GM10248 (cell line): ENCODE measurements at regions of chr15 and their contacts with region 1.

Region 1: GRCh38 chr15:57861036-57861638 is 154.6 kb downstream of the POLR2M start:
- DNase-seq: peak; percentile 36
- CTCF ChIP-seq: peak; percentile 75

Region 2: DNA sequence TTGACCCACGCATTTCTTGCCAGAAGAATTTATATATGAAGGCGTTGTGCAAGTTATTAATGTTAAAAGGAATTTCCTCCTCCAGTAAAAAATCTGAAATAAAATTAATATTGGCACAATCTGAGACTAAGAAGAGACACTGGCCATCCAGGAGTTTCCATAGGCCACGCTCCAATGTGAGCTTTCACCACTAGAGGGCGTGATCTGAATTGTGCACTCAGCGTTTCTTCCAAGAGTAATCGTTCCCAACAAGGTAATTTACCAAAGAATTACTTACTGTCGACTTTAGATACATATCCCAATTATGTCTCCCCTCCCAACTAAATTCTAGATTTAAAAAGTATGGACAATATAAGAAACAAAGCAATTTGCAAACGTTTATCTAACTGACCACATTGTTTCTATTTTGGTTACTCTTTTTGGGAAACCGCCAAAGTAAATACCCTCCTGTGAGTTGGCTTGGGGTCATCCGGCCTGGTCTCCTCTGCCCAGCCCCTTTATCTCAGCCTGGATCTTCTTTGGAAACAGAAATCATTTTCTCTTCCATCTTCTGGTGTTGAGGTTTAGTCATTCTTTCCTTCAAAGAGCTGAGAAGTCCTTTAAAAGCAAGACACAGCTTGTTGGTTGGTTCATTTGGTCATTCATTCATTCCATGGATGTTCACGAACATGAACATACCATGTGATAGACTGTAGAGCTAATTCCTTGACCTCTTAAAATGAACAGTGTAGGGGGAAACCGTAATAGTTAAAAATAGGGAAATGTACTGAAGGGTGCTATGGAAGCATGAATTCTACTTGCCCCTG is 128.4 kb before region 1 on chr15:
- CTCF ChIA-PET with region 1: interaction called, 38 read pairs
- POLR2A ChIA-PET with region 1: no interaction called
- DNase-seq: peak; percentile 55
- CTCF ChIP-seq: peak; percentile 85

Region 3: GRCh38 chr15:57751177-57751800 is 109.8 kb before region 1 on chr15:
- CTCF ChIA-PET with region 1: interaction called, 32 read pairs
- POLR2A ChIA-PET with region 1: no interaction called
- DNase-seq: peak; percentile 26
- CTCF ChIP-seq: peak; percentile 43

Region 4: GRCh38 chr15:57873564-57874209 is 12.6 kb after region 1 on chr15:
- CTCF ChIA-PET with region 1: interaction called, 46 read pairs
- POLR2A ChIA-PET with region 1: no interaction called
- DNase-seq: no peak
- CTCF ChIP-seq: no peak

Region 5: GRCh38 chr15:57924598-57924997 is 63.5 kb after region 1 on chr15:
- CTCF ChIA-PET with region 1: no interaction called
- POLR2A ChIA-PET with region 1: no interaction called
- DNase-seq: no peak
- CTCF ChIP-seq: no peak

Region 6: DNA sequence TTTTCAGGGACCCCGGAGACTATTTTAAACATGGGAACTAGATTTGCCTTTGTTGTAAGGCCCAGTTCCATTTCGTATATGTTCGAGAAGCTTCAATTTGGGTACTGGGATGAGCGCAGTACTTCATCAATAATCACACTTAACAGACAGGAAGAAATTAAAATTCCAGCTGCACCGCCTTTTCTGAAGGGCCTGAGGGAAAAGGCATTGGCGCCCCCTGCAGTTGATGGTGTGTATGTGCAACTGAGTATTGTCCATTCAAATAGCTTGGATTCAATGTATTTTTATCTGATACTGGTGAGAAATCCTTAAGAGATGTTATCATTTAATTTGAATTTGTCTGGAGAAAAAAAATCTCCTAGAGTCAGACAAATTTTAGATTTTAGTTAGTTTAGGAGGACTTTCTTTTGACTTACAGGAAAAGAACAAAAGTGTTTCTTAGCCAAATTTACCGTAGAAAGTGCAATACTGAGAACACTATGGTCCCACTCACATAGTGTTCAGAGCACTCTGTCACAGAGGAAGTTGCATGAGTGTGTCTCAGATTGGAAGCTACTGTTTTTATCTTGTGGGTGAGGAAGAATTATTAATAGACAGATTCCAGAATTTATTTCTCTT is 209.8 kb after region 1 on chr15:
- CTCF ChIA-PET with region 1: interaction called, 44 read pairs
- POLR2A ChIA-PET with region 1: no interaction called
- DNase-seq: peak; percentile 10
- CTCF ChIP-seq: peak; percentile 80